ENCODE measurements at regions of chr4 and their contacts with region 1.

Region 1: DNA sequence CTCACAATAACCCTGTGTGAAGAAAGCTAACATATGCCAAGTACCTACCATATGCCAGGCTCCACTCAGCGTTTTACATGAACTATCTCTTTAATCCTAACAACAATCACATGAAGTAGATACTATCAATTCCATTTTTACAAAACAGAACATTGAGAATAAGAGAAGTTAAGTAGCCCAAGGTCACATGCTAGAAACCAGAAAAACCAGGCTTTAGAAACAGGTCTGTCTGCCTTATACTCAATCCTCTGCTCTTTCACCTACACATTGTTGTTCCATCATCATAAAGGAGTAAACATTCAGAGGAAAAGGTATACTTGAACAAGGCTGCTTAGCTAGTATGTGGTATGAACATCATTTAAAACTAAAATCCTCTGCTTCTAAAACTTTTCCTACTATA is 42.1 kb downstream of the WDFY3 start:
- DNase-seq: peak; percentile 52
- ATAC-seq: 0 out of 2 replicates have a peak, but pooled peaks have one; percentile 22
- H3K4me3 ChIP-seq: no peak overlapping the region
- H3K27ac ChIP-seq: no peak overlapping the region
- H3K4me1 ChIP-seq: peaks cover 26% of the 10 kb centered on the region
- H3K27me3 ChIP-seq: no peaks in the 10 kb centered on the region
- CTCF ChIP-seq: no peak

Region 2: GRCh38 chr4:84887824-84888223 is 36.6 kb before region 1 on chr4:
- CTCF ChIA-PET with region 1: no interaction called
- POLR2A ChIA-PET with region 1: no interaction called
- intact Hi-C with region 1: loop called (anchors 1 kb)
- DNase-seq: peak; percentile 66
- ATAC-seq: no peak; the same call in 1 of the 2 replicates
- H3K4me3 ChIP-seq: no peak overlapping the region
- H3K27ac ChIP-seq: no peak overlapping the region
- H3K4me1 ChIP-seq: peaks cover 5% of the 10 kb centered on the region
- H3K27me3 ChIP-seq: no peaks in the 10 kb centered on the region
- CTCF ChIP-seq: no peak

Region 3: DNA sequence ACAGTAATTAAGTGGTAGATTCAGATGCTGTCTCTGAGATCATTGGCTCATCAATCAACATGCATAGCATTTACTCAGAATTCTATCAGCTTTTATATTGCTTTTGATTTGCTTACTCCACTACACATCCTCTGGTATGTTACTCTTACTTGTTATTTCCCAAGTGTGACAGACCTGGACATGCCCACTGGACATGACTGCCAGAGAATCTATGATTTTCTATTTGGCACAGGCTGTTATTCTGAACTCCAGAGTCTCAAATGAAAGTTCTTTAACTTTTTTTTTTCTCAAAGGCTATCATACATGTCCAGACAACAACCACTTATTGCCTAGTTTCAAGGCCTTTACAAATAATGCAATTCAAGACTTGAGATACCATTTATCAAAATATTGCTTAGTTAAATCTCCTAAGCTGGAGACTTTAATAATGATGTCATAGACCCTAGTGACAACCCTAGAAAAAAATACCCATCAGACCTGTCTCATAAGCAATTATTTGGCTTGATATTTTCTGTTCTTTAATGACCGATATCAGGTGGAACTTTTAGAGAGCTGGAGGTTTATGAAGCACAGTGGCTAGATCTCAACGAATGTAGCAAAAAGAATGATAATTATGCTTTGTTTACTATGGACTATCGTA is 434.5 kb after region 1 on chr4:
- CTCF ChIA-PET with region 1: no interaction called
- POLR2A ChIA-PET with region 1: no interaction called
- intact Hi-C with region 1: no loop called
- DNase-seq: no peak
- ATAC-seq: no peak
- H3K4me3 ChIP-seq: no peak overlapping the region
- H3K27ac ChIP-seq: no peak overlapping the region
- H3K4me1 ChIP-seq: no peaks in the 10 kb centered on the region
- H3K27me3 ChIP-seq: no peaks in the 10 kb centered on the region
- CTCF ChIP-seq: no peak

Measured in PC-3 (cell line).